AG04449 (cell line): ENCODE measurements at regions of chr17 and their contacts with region 1.

Region 1: DNA sequence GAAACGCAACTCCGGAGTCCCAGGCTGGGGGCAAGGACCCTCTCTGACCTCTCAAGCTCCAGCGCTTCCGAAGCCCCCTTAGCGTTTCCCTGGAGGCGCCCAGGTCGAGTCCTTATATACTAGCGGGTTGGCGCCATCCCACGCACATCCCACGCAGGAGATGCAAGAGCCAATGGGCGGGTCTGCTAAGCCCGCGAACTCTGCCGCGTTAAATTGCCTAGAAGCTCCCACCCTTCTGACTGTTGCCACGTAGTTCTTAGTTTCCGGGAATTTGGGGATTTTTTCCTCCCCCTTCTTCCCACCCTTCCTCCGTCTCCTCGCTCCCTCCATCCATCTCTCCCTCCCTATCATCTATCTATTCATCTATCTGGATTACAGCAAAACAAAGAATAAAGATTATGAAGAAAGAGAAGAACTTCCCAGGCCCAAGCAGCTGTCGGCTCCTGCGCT is at the start of gene SLFN11:
- DNase-seq: peak; percentile 88
- H3K4me3 ChIP-seq: peak within 1 kb of the TSS; percentile 92
- CTCF ChIP-seq: no peak

Region 2: DNA sequence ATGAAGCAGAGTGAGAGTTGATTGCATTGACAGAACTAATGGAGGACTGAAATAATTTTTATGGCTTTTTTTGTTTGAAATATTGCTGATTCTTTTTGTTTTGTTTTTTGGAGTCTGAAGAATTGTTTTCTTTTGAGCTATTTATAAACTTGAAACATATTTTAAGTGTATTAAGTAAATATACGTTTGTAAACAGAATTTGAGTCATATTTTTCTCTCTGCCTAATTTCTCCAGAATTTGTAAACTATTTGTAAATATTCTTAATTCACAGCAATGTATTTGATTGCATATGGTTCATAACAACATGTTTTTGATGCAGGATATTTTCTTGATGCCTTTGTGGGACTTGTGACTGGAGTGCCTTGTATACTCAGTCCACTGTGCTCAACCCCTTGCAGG is 50.8 kb before region 1 on chr17:
- CTCF ChIA-PET with region 1: no interaction called
- POLR2A ChIA-PET with region 1: no interaction called
- DNase-seq: no peak
- H3K4me3 ChIP-seq: no peak overlapping the region
- CTCF ChIP-seq: no peak

Region 3: DNA sequence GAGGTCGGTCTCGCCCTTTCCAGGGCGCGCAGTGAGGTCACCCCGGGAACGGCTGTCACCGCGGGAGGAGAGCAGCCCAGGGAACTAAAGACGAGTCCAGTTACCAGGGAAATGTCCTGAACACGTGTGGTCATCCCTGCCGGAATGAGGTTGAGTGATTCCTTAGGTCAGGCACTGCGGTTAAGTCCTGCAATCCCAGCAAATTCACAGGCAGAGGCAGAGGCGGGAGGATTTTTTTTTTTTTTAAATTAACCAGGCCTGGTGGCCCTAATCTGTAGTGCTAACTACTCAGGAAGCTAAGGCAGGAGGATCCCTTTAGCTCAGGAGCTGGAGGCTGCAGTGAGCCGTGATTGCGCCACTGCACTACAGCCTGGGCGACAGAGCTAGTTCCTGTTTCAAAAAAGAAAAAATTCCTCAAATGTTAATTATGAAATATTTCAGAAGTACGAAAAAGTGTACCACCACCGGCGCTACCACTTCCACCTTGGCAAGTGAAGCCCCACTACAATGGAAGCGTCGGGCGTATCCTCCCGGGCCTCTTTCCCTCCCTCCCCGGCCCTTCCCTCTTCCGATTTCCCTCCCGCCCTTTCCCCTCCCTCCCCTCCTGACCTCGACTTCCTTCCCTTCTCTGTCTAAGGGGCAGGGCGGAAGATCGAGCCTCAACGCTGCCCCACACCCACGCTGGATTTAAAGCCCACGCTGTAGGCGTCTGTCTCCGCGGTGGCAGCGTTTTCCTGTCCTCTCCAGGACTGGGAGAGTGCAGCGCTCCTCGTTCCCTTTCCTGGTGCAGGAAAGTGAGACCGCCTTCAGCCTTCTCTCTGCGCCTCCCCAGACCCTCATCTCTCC is 27.4 kb before region 1 on chr17:
- CTCF ChIA-PET with region 1: no interaction called
- POLR2A ChIA-PET with region 1: interaction called, 11 read pairs
- DNase-seq: no peak
- H3K4me3 ChIP-seq: peak overlapping the region; percentile 54
- CTCF ChIP-seq: no peak

Region 4: DNA sequence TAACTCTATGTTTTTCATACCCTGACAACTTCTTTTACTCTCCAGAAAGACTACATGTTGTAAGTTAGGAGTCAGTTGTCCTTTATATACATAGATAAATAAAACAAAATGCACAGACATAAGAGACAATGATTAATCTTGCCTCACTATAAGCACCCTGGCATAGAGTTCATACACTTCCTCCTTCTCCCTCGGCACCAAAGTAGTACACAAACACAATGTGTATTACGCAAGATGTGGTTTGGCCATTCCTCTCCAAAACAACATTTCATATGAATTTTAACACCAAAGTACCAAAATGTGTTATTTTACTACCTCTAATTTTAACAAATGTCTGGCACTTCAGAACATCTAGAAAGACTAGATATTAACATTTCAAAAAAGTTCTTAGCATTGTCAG is 17.1 kb after region 1 on chr17:
- CTCF ChIA-PET with region 1: no interaction called
- POLR2A ChIA-PET with region 1: no interaction called
- DNase-seq: no peak
- H3K4me3 ChIP-seq: no peak overlapping the region
- CTCF ChIP-seq: no peak

Region 5: DNA sequence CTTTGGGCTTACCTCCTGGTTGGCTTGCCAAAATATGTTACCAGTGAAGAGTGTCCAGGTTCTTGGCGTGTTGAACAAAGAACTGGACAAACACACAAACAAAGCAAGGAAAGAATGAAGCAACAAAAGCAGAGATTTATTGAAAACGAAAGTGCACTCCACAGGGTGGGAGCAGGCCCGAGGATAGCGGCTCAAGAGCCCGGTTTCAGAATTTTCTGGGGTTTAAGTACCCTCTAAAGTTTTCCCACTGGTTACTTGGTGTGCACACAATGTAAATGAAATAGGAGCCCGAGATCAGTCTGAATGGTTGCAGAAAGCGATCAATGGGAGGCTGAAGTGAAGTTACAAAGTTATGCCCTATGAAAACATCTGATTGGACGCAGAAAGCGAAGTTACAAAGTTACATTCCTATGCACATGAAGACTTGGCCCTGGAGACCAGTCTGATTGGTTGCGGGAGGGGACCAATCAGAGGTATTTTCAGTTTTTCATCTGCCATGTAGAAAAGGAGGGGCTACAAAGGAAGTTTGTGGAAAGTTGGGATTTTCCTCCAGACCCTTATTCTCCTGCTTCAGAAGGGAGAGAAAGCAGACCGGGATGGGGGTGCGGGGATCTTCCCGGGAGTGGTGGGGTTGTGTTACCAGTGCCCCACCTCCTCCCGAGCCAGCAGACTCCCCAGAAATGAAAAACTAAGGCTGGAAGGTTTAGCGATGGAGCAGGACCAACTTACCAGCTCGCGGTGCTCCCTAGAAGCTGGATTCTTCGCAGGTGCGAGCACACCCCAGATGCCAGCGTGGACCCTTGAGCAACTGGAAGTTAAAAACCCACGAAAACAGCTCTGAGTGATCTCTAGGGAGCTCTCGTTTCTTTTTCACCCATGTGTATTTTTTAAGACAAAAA is 58.9 kb after region 1 on chr17 and contains the start of gene SLFN12:
- CTCF ChIA-PET with region 1: no interaction called
- POLR2A ChIA-PET with region 1: interaction called, 20 read pairs
- DNase-seq: peak; percentile 91
- H3K4me3 ChIP-seq: peak within 1 kb of the TSS; percentile 84
- CTCF ChIP-seq: no peak

Region 6: DNA sequence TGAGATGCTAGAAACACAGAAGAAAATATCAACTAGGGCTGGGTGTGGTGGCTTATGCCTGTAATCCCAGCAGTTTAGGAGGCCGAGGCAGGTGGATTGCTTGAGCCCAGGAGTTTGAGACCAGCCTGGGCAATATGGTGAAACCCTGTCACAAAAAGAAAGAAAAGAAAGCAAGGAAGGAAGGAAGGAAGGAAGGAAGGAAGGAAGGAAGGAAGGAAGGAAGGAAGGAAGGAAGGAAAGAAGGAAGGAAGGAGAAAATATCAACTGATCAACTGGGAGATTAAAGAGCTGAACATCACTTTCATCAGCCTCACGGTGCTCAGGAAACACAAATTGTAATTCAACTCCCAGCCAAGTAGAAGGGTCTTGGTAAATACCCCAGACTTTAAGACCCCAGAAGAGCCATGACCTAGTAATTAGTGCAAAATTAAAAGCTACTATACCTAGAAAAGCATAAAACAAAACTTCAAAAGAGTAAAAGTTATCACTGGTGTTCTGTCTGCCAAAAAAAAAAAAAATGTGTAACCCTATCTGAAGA is 102.8 kb after region 1 on chr17:
- CTCF ChIA-PET with region 1: no interaction called
- POLR2A ChIA-PET with region 1: no interaction called
- DNase-seq: no peak
- H3K4me3 ChIP-seq: no peak overlapping the region
- CTCF ChIP-seq: no peak